ENCODE measurements at regions of chr14 and their contacts with region 1.

Region 1: GRCh38 chr14:103628684-103629502 is at the start of gene KLC1:
- DNase-seq: peak; percentile 72
- H3K4me3 Mint-ChIP-seq: peak within 1 kb of the TSS; percentile 83
- H3K27ac Mint-ChIP-seq: peak within 1 kb of the TSS; percentile 89
- H3K4me1 Mint-ChIP-seq: peaks cover 13% of the 10 kb centered on the region
- H3K27me3 Mint-ChIP-seq: no peaks in the 10 kb centered on the region
- CTCF ChIP-seq: no peak
- total RNA-seq, gene KLC1: 216 and 220 TPM in 2 replicates

Region 2: DNA sequence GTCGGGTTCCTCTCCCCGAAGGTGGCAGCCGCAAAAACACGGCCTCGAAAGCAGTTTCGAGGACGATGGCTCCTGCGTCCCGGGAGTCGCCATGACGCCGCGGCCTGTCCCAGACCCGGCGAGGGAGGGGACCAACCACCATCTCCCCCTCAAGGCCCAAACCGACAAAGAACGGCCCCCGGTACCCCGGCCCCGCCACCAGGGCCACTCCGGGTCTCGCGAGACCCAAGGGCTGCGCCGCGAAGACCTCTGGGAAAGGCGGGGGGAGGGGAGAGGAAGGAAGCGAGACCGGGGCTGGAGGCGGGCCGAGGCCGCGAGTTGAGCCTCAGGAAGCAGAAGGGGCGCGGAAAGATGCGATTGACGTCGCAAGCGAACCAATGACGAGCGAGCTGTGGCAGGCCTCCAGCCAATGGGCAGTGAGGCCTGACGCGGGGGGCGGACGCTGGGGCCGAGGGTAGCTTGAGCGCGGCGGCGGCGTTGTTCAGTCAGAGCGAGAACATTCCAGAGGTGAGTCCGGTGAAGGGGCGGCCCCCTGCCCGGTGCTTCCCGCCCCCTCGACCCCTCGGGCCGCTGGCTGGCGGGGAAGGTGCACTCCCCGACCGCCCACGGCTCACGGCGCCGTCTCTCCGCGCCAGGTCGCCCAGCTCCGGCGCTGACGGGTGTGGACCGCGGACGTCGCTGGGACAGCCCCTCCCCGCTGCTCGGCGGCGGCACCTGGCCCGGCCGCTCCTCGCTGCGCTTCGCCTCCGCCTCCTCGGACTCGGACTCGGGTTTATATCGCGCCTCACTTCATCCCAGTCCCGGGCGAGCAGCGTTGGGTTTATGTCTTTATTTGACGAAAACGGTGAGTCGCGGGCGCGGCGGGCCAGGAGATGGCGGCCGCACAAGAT is 294.9 kb before region 1 on chr14 and contains the start of gene EIF5:
- CTCF ChIA-PET with region 1: no interaction called
- POLR2A ChIA-PET with region 1: no interaction called
- intact Hi-C with region 1: no loop called
- DNase-seq: peak; percentile 98
- H3K4me3 Mint-ChIP-seq: peak within 1 kb of the TSS; percentile 89
- H3K27ac Mint-ChIP-seq: peak within 1 kb of the TSS; percentile 97
- H3K4me1 Mint-ChIP-seq: peaks cover 15% of the 10 kb centered on the region
- H3K27me3 Mint-ChIP-seq: no peaks in the 10 kb centered on the region
- CTCF ChIP-seq: peak; percentile 13
- total RNA-seq, gene EIF5: 149 and 327 TPM in 2 replicates

Region 3: GRCh38 chr14:103715052-103716000 is 86.4 kb after region 1 on chr14 and contains the starts of genes XRCC3 and ZFYVE21:
- CTCF ChIA-PET with region 1: no interaction called
- POLR2A ChIA-PET with region 1: interaction called, 5 read pairs
- intact Hi-C with region 1: loop called (anchors 10 kb)
- DNase-seq: peak; percentile 100
- H3K4me3 Mint-ChIP-seq: peak within 1 kb of the TSS; percentile 94
- H3K27ac Mint-ChIP-seq: peak within 1 kb of the TSS; percentile 87
- H3K4me1 Mint-ChIP-seq: peaks cover 38% of the 10 kb centered on the region
- H3K27me3 Mint-ChIP-seq: no peaks in the 10 kb centered on the region
- CTCF ChIP-seq: no peak
- total RNA-seq, gene XRCC3: 9.4 and 17.5 TPM in 2 replicates
- total RNA-seq, gene ZFYVE21: 28.6 and 35.5 TPM in 2 replicates